Mammary epithelial cell (primary cell): ENCODE measurements at regions of chr21 and their contacts with region 1.

Region 1: GRCh38 chr21:43333298-43334062 is 93.5 kb downstream of the SIK1 start:
- DNase-seq: peak; percentile 81
- H3K4me3 ChIP-seq: peak overlapping the region in 2 of 3 experiments; percentile 15 to 23
- H3K27ac ChIP-seq: peak overlapping the region; percentile 90
- H3K4me1 ChIP-seq: peaks cover 17% of the 10 kb centered on the region
- H3K27me3 ChIP-seq: no peaks in the 10 kb centered on the region
- CTCF ChIP-seq: peak in 1 of 2 donors; percentile 11

Region 2: GRCh38 chr21:43361493-43362296 is 28.2 kb after region 1 on chr21:
- CTCF ChIA-PET with region 1: no interaction called
- dilution Hi-C with region 1: no loop called
- in situ Hi-C with region 1: no loop called
- intact Hi-C with region 1: loop called (anchors 1 kb)
- DNase-seq: peak; percentile 93
- H3K4me3 ChIP-seq: peak overlapping the region in 2 of 3 experiments; percentile 2 to 32
- H3K27ac ChIP-seq: peak overlapping the region; percentile 95
- H3K4me1 ChIP-seq: peaks cover 28% of the 10 kb centered on the region
- H3K27me3 ChIP-seq: no peaks in the 10 kb centered on the region
- CTCF ChIP-seq: no peak